ENCODE measurements at regions of chr7 and their contacts with region 1.

Region 1: DNA sequence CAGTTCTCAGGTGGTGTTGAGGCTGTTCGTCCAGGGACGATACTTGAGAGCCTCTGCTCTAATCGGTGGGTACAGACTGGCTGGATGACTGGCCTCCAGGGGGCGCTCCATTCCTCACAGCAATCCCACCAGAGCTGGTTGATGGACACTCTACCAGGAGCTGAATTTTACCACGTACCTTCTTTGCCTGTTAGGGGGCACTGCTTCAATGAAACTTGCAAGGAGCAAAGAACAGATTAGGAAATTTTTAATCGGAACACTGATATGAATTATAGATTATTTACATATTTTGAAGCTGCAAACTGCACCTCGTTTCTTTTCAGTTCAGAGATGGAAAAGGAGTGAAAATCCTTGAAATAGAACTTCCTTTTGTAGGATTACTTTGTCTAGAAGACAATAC is 44.9 kb downstream of the KBTBD2 start:
- DNase-seq: peak; percentile 94

Region 2: DNA sequence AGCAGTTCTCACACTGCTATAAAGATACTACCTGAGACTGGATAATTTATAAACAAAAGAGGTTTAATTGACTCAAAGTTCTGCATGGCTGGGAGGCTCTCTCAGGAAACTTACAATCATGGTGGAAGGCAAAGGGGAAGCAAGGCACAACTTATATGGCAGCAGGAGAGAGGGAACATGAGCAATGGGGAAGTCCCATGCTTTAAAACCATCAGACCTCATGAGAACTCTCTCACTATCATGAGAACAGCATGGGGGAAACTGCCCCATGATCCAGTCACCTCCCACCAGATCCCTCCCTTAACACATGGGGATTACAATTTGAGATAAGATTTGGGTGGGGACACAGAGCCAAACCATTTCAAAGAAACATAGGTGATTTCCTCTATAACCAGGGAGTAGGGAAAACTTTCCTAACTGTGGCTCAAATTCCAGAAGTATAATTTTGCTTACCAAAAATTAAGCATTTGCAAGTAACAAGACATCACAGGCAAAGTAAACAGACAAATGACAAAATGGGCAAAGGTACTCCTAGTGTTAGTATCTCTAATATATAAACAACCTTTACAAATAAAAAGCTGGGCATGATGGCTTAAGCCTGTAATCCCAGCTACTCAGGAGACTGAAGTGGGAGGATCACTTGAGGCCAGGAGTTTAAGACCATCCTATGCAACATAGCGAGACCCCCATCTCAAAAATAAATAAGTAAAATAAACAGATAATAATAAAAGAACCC is 43.1 kb before region 1 on chr7:
- intact Hi-C with region 1: loop called (anchors 5 kb)
- DNase-seq: no peak

Region 3: DNA sequence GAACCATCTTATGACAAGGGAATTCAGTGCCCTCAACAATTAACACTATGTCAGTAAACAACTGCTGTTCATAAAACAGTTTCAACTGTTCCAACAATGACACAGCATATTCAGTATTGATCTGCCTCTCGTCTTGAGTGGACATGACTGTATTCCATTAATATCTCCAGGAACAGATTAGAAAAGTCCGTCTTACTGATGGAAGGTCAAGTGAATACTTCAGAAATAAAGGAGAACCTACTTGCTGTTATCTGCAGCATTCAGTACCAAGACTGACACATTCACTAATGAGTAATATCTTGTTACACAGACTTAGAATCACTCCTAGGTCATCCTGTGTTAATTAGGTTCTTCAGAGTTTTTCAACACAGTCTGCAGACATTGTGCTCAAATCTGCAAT is 32.8 kb after region 1 on chr7:
- intact Hi-C with region 1: no loop called
- DNase-seq: no peak

Region 4: GRCh38 chr7:33578166-33578565 is 731.5 kb after region 1 on chr7:
- intact Hi-C with region 1: no loop called
- DNase-seq: no peak

Measured in cardiac septum (tissue), 1 donor.